H1 (cell line): ENCODE measurements at regions of chr1 and their contacts with region 1.

Region 1: DNA sequence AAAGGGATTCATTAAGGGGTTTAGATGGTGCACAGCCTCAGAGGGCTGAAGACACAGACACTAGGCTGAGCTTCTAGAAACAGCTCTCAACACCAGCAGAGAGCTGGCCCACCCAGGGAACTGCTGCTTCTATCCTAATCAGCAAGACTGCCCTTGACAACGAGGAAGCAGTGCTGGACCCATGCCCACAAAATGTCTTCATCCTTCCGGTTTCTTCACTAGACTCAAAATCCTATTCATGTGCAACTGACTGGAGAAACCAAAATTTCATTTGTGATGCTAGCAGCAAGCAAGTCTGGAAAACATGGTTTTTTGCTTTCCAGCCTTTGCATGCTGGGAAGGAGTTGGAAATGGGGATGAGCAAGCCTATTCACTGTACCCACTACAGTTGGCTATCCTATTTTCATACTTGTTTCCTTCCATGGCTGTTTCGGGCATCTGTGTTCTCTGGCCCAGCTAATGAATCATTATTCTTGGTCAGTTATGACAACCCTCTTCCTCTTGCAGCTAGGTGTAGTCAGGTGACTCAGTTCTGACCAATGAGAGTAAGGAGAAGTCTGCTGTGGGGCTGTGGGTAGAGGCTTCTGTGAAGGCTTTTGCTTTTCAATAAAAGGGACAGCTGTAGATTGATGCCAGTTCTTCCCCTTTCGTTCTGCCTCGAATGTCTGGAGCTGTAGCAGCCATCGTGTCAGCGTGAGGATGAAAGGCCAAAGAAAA is 14.6 kb upstream of the TMEM61 start:
- DNase-seq: no peak
- H3K4me3 ChIP-seq: no peak overlapping the region
- H3K27ac ChIP-seq: no peak overlapping the region
- H3K4me1 ChIP-seq: peaks cover 0 to 14% (median 11%) of the 10 kb centered on the region in 4 experiments; a peak in 5 of 7 replicates
- H3K27me3 ChIP-seq: no peaks in the 10 kb centered on the region
- CTCF ChIP-seq: no peak
- EP300 ChIP-seq: no peak
- POLR2A ChIP-seq: no peak
- RAD21 ChIP-seq: no peak

Region 2: DNA sequence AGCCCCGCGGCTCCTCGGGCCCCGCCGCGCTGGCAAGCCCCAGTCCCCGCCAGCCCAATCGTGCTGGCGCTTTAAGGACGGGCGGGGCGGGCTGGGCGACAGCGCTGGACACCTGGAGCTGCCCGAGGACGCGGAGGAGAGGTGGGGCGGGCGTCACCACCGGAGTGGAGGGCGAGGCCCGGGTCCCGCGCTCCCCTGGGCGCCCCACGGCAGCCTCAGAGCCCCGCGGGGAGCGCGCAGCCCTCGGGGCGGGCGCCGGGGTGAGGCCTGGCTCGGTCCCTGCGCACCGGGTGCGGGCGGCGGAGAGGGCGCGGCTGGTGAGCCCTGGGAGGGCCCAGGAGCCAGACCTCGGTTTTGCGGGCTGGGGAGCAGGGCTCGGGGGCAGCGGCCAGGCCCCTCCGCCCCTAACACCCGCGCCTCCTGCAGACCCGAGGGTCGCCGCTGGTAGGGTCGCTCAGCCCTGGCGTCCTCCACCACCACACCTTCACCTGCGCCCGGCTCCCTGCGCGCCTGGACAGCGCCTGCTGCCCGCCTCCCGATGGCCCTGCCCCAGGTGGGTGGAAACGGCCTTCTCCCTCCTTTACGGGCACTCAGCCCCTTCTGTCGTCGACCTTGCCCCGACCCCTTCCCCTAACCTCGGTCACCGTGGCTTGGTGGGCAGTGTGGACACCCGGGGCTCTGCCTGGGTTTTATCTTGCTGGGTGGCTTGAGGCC is 14.9 kb after region 1 on chr1 and contains the start of gene TMEM61:
- CTCF ChIA-PET with region 1: interaction called, 12 read pairs
- POLR2A ChIA-PET with region 1: interaction called, 3 read pairs
- DNase-seq: peak in 1 of 2 experiments; percentile 66
- H3K4me3 ChIP-seq: peak within 1 kb of the TSS; percentile 39 to 66 (median 50)
- H3K27ac ChIP-seq: no peak within 1 kb of the TSS
- H3K4me1 ChIP-seq: peaks cover 4 to 8% (median 7%) of the 10 kb centered on the region in 4 experiments; a peak in 6 of 7 replicates
- H3K27me3 ChIP-seq: peaks cover 0 to 29% (median 18%) of the 10 kb centered on the region in 4 experiments; a peak in 6 of 7 replicates
- CTCF ChIP-seq: no peak
- EP300 ChIP-seq: no peak
- POLR2A ChIP-seq: no peak
- RAD21 ChIP-seq: no peak
- total RNA-seq, gene TMEM61: 0.50 and 0.54 TPM in 2 replicates

Region 3: DNA sequence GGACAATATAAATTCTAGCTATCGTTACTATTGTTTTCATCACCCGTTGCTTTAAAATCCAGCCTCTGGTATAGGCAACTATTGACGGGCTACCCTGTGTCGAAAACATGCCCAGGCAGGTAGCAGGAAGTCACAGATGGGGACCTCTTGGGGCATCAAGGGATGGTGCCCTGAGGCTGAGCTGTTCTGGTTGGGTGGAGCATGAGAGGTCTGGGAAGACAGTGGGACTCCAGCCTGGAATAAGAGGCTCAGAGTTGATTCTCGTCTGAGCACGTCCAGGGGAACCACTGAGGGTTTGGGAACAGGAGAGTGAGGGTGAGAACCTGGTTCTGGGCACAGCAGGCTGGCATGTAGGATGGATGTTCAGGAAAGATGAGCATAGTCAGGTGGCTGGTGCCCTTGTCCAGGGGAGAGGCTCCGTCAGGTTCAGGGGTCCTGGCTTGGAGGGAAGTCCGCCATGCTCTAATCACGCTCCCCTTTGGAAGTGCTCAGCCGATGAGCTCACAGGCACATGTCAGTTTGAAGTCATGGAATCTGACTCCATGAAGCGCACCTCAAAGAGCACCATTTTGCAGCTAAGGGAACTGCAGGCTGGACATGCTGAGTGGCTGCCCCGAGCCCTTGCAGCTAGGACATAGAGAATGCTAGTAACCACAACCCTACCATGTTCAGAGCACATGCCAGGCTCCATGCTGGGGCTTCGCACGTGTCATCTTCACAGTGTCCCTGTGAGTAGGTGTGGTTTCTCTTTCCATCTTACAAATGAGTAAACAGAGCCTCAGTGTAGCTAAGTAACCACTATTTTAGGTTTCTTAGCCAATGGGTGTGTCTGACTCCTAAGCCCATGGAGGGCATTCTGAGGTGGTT is 94.6 kb after region 1 on chr1:
- CTCF ChIA-PET with region 1: no interaction called
- POLR2A ChIA-PET with region 1: no interaction called
- DNase-seq: no peak
- H3K4me3 ChIP-seq: no peak overlapping the region
- H3K27ac ChIP-seq: no peak overlapping the region
- H3K4me1 ChIP-seq: no peaks in the 10 kb centered on the region
- H3K27me3 ChIP-seq: no peaks in the 10 kb centered on the region
- CTCF ChIP-seq: no peak
- EP300 ChIP-seq: no peak
- POLR2A ChIP-seq: no peak
- RAD21 ChIP-seq: no peak